ENCODE measurements at regions of chr7 and their contacts with region 1.

Region 1: GRCh38 chr7:132160611-132161532 is 415.4 kb downstream of the PLXNA4 start:
- DNase-seq: no peak
- ATAC-seq: peak; percentile 59

Region 2: DNA sequence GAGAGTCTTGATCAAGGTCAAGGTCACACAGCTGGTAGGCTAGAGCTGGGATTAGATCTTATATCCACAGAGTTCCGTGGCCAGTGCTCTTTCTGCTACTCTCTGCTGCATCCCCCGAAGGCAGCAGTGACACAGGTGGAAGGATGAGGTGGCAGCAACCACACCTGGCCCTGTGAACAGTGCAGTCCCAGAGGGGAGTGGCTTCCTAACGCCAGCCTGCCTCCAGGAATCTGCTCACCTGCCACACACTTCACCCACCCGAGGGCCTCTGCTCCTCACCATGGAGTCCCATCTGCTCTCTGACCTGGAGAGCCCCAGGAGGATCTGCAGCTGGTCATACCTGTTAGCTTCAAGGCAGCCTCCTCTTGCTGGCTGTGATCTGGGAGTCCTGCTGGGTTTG is 68.8 kb before region 1 on chr7:
- intact Hi-C with region 1: no loop called
- DNase-seq: no peak
- ATAC-seq: no peak

Region 3: DNA sequence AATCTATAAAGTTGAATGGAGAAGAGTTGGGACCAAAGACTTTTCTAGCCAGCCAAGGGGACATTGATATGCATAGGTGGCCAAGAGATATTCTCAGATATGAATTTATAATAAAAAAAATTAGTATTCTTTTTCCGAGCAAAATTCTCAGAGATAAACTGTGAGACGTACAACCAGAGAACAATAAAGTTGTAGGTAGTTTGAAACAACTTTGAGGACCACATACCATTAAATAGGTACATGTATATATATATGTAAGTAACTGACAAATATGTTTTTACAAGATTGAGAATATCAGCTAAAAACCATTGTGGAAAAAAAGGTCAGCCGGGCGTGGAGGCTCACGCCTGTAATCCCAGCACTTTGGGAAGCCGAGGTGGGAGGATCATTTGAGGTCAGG is 1148.5 kb after region 1 on chr7:
- intact Hi-C with region 1: loop called (anchors 5 kb)
- DNase-seq: no peak
- ATAC-seq: no peak